HEK293T (cell line): ENCODE measurements at regions of chr2 and their contacts with region 1.

Region 1: DNA sequence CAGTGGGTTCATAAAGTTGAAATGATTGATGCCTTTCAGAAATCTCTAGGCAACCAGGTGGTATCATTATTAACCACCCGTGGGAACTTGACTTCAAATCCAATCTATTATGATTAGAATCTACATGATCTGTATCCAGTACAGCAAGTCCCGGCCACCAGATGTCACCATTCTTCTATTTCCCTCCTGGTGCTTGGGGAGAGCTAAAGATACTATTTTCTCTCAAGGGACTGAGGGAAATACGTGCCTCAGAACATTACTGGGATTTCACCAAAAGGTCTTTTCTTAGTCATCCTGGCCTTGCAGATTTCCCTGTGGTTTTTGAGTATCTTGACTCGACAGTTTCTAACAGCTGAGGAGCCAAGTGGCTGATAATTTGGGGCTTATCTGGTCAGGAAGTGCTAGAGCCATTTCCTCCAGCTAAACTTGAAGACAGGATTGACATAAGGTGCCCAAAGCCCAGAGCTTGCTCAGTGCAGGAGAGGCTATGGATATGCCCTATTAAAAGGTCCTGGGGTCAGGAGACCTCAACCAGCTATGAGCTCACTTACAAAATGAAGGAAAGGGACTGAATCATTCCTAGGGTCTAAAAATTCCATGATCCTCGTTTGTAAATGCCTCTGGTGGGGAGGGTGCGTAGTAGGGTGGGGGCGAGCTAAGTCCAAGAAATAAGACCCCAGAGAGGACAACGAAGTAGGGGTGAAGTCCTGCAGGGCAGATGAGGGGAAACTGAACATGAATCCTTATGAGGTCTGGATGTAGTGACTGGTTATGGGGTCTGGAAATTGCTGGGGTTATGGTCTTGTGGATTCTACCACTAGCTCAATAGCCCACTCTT is 135.4 kb upstream of the MGAT5 start:
- DNase-seq: peak; percentile 62

Region 2: DNA sequence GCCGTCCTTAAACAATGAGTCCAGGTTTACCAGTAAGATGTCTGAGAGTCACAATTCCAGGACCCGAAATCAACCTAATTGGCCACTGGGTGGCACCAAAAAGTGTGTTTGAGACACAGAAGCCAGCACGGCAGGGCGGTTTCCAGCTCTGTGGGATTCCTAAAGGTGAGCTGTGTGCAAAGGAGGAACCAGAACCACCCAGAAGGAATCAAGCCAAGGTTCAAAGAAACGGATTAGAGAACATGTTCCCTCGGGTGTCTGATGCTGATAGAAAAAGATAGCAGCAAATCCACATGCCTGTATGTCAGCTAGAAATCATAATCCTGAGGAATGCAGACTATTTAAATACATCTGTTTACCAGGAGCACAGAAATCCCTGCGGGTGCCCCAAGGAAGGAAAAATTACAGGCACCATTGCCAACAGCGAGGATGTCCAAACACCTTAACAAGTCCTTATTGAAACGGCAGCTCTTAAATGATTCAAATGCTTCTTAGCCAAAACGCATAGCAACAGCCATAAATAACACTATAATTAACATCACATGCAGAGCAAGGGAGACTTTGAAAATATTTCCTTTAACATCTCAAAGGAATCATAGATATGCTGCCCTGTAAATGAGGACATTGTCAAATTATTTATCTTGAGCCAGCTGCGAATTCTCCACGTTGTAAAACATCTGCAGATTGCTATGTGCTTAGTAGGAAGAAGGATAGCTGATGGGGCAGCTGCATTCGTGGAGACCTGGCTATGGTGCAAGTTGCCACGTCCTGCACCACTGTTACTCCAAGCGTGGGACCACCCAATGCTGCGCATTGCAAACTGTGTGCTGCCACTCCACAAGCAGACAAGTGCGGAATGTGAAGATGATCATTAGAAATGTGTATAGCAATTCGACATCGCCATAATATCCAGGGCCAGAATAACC is 231.5 kb before region 1 on chr2:
- CTCF ChIA-PET with region 1: interaction called, 20 read pairs
- POLR2A ChIA-PET with region 1: no interaction called
- DNase-seq: peak; percentile 75

Region 3: DNA sequence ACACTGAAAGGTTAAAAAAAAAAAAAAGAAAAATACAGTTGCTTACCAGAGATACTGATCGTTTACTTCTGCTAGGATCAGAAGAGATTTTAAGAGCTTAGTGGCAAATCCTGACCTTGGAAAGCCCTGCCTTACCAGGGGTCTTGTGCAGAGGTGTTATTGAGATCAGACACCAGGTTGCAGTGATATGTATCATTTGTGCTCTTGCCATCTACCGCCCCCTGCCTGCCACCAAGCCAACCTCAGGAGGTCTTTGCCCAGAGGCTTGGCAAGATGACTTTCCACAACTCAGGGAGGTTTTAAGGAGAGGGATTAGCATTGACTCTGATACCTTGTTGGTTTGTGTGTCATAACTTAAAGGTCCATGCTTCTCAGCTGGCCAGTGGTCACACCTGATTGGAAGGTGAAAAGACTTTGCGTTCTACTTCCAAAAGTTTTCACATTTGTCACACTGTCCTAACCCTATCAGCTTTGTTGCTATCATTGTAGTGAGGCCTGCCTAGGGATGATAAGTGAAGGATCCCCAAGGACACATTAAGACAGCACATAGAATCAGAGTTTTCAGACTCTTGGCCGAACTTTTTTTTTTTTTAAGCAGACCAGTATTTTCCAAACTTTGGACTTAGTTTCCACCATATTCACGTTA is 89.2 kb after region 1 on chr2:
- CTCF ChIA-PET with region 1: interaction called, 27 read pairs
- POLR2A ChIA-PET with region 1: interaction called, 3 read pairs
- DNase-seq: peak; percentile 64

Region 4: GRCh38 chr2:134245340-134245984 is 127.0 kb after region 1 on chr2:
- CTCF ChIA-PET with region 1: interaction called, 17 read pairs
- POLR2A ChIA-PET with region 1: no interaction called
- DNase-seq: peak; percentile 45

Region 5: GRCh38 chr2:134411828-134412638 is 293.5 kb after region 1 on chr2:
- CTCF ChIA-PET with region 1: interaction called, 15 read pairs
- POLR2A ChIA-PET with region 1: no interaction called
- DNase-seq: peak; percentile 70

Region 6: DNA sequence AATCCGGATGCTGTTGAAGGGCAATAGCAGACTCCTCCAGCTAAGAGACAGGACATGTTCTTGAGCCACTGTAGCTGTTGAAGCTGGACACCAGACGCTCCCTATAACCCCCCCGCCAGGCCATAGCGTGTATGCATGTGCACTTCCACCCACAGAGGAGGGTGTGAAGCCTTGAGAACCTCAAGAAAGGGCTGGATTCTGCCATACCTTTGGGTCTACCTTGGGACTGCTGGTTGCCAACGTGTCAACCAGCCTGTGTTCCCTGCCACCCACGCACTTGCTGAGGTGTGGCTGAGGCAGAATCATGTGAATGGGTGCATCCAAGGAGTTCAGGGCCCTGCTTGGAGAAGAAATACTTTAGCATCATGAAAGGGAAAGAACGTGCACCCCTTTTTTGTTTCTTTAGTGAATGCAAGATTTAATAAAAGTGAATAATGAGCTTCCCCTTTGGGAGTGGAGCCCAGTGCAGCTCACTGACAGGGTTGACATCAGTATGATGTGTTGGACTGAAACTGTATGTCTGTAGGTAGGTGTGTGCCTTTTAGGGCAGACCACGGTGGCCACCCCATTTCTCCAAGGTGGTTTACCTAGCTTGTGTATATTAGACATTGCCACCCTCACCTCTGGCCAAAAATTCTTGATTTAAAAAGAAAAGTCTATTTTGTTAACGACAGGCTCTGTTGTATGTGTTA is 333.7 kb after region 1 on chr2:
- CTCF ChIA-PET with region 1: interaction called, 15 read pairs
- POLR2A ChIA-PET with region 1: no interaction called
- DNase-seq: no peak